PC-9 (cell line): ENCODE measurements at regions of chr1 and their contacts with region 1.

Region 1: DNA sequence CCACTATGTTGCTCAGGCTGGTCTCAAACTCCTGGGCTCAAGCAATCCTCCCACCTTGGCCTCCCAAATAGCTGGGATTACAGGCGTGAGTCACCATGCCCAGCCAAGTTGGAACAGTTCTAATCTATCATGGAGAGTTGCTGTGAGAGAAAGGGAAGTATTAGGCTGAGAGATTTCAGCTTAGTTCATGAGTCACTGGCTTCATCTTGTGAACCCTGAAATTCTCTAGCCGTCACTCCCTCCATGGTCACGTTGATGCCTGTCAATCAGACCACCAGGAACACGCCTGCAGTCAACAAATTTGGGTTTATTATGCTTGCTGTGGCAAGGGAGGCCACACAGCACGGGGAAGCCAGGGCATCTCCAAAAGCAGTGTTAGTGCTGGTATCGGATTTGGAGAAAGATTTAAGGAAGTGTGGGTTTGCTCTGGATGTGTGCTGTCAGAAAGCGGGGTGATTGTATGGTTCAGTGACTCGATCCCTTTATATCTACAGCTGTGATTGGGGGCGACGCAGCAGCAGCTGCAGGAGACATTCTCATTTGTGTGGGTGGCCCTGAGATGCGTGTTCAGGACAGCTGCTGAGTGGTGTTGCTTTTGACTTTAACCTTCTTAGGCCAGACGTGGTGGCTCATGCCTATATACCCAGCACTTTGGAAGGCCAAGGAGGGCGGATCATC is 18.7 kb downstream of the UQCRHL start:
- DNase-seq: peak in 1 of 2 experiments; percentile 53
- H3K4me3 ChIP-seq: no peak overlapping the region
- H3K27ac ChIP-seq: peak overlapping the region; percentile 74
- H3K4me1 ChIP-seq: peaks cover 36% of the 10 kb centered on the region
- H3K27me3 ChIP-seq: no peaks in the 10 kb centered on the region
- CTCF ChIP-seq: no peak

Region 2: GRCh38 chr1:15584489-15585363 is 204.0 kb before region 1 on chr1 and contains the start of gene AGMAT:
- CTCF ChIA-PET with region 1: no interaction called
- POLR2A ChIA-PET with region 1: no interaction called
- intact Hi-C with region 1: no loop called
- DNase-seq: peak in 1 of 2 experiments; percentile 48
- H3K4me3 ChIP-seq: peak within 1 kb of the TSS; percentile 59
- H3K27ac ChIP-seq: 0 out of 2 replicates have a peak within 1 kb of the TSS, but pooled peaks have one; percentile 18
- H3K4me1 ChIP-seq: no peaks in the 10 kb centered on the region
- H3K27me3 ChIP-seq: no peaks in the 10 kb centered on the region
- CTCF ChIP-seq: peak; percentile 37; the same call in 1 of the 2 replicates
- total RNA-seq, gene AGMAT: 2.7 and 2.9 TPM in 2 replicates

Region 3: GRCh38 chr1:15741183-15741850 is 47.4 kb before region 1 on chr1:
- CTCF ChIA-PET with region 1: interaction called, 12 read pairs
- POLR2A ChIA-PET with region 1: no interaction called
- intact Hi-C with region 1: no loop called
- DNase-seq: peak; percentile 63 to 88
- H3K4me3 ChIP-seq: no peak overlapping the region
- H3K27ac ChIP-seq: no peak overlapping the region
- H3K4me1 ChIP-seq: no peaks in the 10 kb centered on the region
- H3K27me3 ChIP-seq: no peaks in the 10 kb centered on the region
- CTCF ChIP-seq: peak; percentile 82

Region 4: GRCh38 chr1:15820478-15820877 is 31.7 kb after region 1 on chr1:
- CTCF ChIA-PET with region 1: interaction called, 16 read pairs
- POLR2A ChIA-PET with region 1: no interaction called
- intact Hi-C with region 1: no loop called
- DNase-seq: peak; percentile 64 to 75
- H3K4me3 ChIP-seq: no peak overlapping the region
- H3K27ac ChIP-seq: 0 out of 2 replicates have a peak overlapping the region, but pooled peaks have one; percentile 19
- H3K4me1 ChIP-seq: no peaks in the 10 kb centered on the region
- H3K27me3 ChIP-seq: no peaks in the 10 kb centered on the region
- CTCF ChIP-seq: no peak

Region 5: DNA sequence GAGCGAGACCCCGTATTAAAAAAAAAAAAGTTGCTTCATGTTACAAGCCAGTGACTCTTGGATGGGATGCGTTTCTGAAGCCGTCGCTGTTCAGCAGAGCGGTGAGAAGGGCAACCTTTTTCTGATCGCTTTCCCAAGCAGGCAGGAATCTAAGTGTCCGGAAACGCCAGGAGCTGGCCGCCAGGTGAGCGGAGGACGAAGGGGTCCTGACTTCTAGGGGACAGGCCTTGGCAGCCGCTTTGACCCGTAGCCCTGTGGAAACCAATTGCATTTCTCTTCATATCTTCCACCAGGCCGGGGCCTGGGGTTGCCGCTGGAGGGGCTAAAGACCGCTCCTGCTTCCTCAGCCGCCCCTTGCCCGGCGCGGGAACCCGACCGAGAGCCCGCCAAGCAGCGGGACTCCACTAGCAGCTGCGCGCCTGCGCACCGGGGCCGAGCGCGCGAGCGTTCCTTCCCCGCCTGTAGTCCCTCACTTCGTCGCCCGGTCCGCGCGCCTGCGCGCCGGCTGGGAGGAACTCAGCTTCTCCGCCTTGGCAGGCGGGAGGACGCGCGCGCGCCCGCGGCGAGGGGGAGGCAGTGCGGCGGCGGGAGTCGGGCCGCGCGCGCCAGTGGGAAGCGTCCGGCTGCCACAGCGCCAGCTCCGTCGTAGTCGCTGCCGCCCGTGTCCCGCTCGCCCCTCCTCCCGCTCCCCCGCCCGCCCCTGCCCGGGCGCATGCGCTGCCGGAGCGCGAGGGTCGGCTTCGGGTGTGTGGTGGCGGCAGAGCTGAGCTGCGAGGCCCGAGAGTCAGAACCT is 58.5 kb after region 1 on chr1 and contains the start of gene SPEN:
- CTCF ChIA-PET with region 1: interaction called, 3 read pairs
- POLR2A ChIA-PET with region 1: interaction called, 15 read pairs
- intact Hi-C with region 1: no loop called
- DNase-seq: peak; percentile 77 to 97
- H3K4me3 ChIP-seq: peak within 1 kb of the TSS; percentile 95
- H3K27ac ChIP-seq: peak within 1 kb of the TSS; percentile 90
- H3K4me1 ChIP-seq: peaks cover 20% of the 10 kb centered on the region
- H3K27me3 ChIP-seq: no peaks in the 10 kb centered on the region
- CTCF ChIP-seq: no peak
- total RNA-seq, gene SPEN: 44.9 and 46.8 TPM in 2 replicates

Region 6: DNA sequence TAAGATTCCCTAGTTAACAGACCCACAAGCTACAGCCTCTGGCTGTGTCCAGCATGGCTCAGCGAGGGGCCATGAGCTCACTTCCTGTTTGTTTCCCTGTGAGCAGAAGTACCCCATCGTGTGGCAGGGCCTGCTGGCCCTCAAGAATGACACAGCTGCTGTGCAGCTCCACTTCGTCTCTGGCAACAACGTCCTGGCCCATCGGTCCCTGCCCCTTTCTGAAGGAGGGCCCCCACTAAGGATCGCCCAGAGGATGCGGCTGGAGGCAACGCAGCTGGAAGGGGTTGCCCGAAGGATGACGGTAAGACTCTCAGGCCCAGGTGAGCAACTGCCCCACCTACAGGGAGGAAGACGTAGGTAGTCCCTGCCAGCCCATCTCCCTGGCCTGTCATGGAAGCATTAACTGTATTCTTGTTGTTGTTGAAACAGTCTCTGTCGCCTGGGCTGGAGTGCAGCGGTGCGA is 149.0 kb after region 1 on chr1:
- CTCF ChIA-PET with region 1: no interaction called
- POLR2A ChIA-PET with region 1: interaction called, 12 read pairs
- intact Hi-C with region 1: no loop called
- DNase-seq: no peak
- H3K4me3 ChIP-seq: no peak overlapping the region
- H3K27ac ChIP-seq: no peak overlapping the region
- H3K4me1 ChIP-seq: no peaks in the 10 kb centered on the region
- H3K27me3 ChIP-seq: no peaks in the 10 kb centered on the region
- CTCF ChIP-seq: no peak

Region 7: GRCh38 chr1:15994590-15995351 is 206.0 kb after region 1 on chr1:
- CTCF ChIA-PET with region 1: no interaction called
- POLR2A ChIA-PET with region 1: no interaction called
- intact Hi-C with region 1: loop called (anchors 1 kb)
- DNase-seq: peak in 1 of 2 experiments; percentile 55
- H3K4me3 ChIP-seq: no peak overlapping the region
- H3K27ac ChIP-seq: no peak overlapping the region
- H3K4me1 ChIP-seq: no peaks in the 10 kb centered on the region
- H3K27me3 ChIP-seq: no peaks in the 10 kb centered on the region
- CTCF ChIP-seq: peak; percentile 68

Region 8: GRCh38 chr1:16055613-16056520 is 267.1 kb after region 1 on chr1:
- CTCF ChIA-PET with region 1: no interaction called
- POLR2A ChIA-PET with region 1: no interaction called
- intact Hi-C with region 1: loop called (anchors 1 kb)
- DNase-seq: peak; percentile 87 to 93
- H3K4me3 ChIP-seq: no peak overlapping the region
- H3K27ac ChIP-seq: peak overlapping the region; percentile 21; the same call in 1 of the 2 replicates
- H3K4me1 ChIP-seq: peaks cover 30% of the 10 kb centered on the region
- H3K27me3 ChIP-seq: no peaks in the 10 kb centered on the region
- CTCF ChIP-seq: peak; percentile 99